HepG2 (cell line): ENCODE measurements at regions of chr6 and their contacts with region 1.

Region 1: GRCh38 chr6:133512410-133513016 is 271.4 kb downstream of the EYA4 start:
- DNase-seq: peak; percentile 46
- ATAC-seq: peak; percentile 80
- H3K4me3 ChIP-seq: no peak overlapping the region
- H3K27ac ChIP-seq: no peak overlapping the region
- H3K4me1 ChIP-seq: no peaks in the 10 kb centered on the region
- H3K27me3 ChIP-seq: peaks cover 0 to 2% of the 10 kb centered on the region in 2 experiments; a peak in 1 of 5 replicates
- CTCF ChIP-seq: peak; percentile 81
- EP300 ChIP-seq: no peak
- POLR2A ChIP-seq: no peak
- RAD21 ChIP-seq: peak; percentile 69

Region 2: DNA sequence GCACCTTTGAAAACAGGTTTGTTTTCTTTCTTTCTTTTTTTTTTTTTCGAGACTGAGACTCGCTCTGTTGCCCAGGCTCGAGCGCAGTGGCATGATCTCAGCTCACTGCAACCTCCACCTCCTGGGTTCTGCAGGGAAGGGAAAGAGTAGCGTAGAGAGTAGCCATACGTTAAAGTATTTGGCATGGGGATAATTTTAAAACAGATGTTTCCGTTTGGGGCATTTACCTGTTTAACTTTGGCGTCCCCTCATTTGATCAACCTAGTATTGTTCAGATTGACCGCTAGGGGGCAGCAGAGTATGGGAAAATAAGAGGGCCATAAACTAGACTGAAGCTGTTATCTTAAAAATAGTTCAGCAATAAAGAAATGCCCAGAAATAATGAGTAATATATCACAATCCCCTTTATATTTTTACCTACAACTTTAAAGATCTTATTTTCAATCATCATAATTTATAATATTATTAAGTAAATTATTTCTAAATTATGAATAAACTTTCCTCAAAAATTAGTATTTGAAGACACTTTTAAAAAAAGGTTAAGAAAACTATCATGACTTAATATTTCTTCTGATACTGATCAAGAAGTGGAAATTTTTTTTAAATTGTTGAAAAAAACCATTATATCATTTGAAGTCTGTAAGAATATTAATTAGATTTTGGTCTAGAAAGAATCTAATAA is 982.1 kb before region 1 on chr6:
- CTCF ChIA-PET with region 1: interaction called, 4 read pairs
- POLR2A ChIA-PET with region 1: no interaction called
- in situ Hi-C with region 1: no loop called
- intact Hi-C with region 1: loop called (anchors 5 kb)
- DNase-seq: peak; percentile 72
- ATAC-seq: peak; percentile 90
- H3K4me3 ChIP-seq: peak overlapping the region in 2 of 3 experiments; percentile 29 to 58; a peak in 4 of 6 replicates
- H3K27ac ChIP-seq: no peak overlapping the region
- H3K4me1 ChIP-seq: peaks cover 25% of the 10 kb centered on the region
- H3K27me3 ChIP-seq: peaks cover 0 to 6% of the 10 kb centered on the region in 2 experiments; a peak in 2 of 5 replicates
- CTCF ChIP-seq: peak; percentile 81
- EP300 ChIP-seq: no peak
- POLR2A ChIP-seq: no peak
- RAD21 ChIP-seq: peak; percentile 68; the same call in 1 of the 2 replicates

Region 3: GRCh38 chr6:132820629-132821381 is 691.7 kb before region 1 on chr6:
- CTCF ChIA-PET with region 1: interaction called, 10 read pairs
- POLR2A ChIA-PET with region 1: no interaction called
- in situ Hi-C with region 1: no loop called
- intact Hi-C with region 1: loop called (anchors 1 kb)
- DNase-seq: peak; percentile 20
- ATAC-seq: peak; percentile 65
- H3K4me3 ChIP-seq: no peak overlapping the region
- H3K27ac ChIP-seq: no peak overlapping the region
- H3K4me1 ChIP-seq: peaks cover 46% of the 10 kb centered on the region
- H3K27me3 ChIP-seq: no peaks in the 10 kb centered on the region; a peak in 1 of 5 replicates
- CTCF ChIP-seq: no peak
- EP300 ChIP-seq: no peak
- POLR2A ChIP-seq: peak; percentile 48 to 76; a peak in 3 of 4 replicates
- RAD21 ChIP-seq: no peak

Region 4: GRCh38 chr6:132830334-132830751 is 682.2 kb before region 1 on chr6:
- CTCF ChIA-PET with region 1: interaction called, 12 read pairs
- POLR2A ChIA-PET with region 1: no interaction called
- in situ Hi-C with region 1: loop called (anchors 5 kb)
- intact Hi-C with region 1: loop called (anchors 1 kb)
- DNase-seq: peak; percentile 33
- ATAC-seq: peak; percentile 81
- H3K4me3 ChIP-seq: no peak overlapping the region
- H3K27ac ChIP-seq: no peak overlapping the region
- H3K4me1 ChIP-seq: no peaks in the 10 kb centered on the region
- H3K27me3 ChIP-seq: peaks cover 0 to 7% of the 10 kb centered on the region in 2 experiments; a peak in 1 of 5 replicates
- CTCF ChIP-seq: peak; percentile 70
- EP300 ChIP-seq: no peak
- POLR2A ChIP-seq: no peak
- RAD21 ChIP-seq: peak; percentile 57; the same call in 1 of the 2 replicates

Region 5: DNA sequence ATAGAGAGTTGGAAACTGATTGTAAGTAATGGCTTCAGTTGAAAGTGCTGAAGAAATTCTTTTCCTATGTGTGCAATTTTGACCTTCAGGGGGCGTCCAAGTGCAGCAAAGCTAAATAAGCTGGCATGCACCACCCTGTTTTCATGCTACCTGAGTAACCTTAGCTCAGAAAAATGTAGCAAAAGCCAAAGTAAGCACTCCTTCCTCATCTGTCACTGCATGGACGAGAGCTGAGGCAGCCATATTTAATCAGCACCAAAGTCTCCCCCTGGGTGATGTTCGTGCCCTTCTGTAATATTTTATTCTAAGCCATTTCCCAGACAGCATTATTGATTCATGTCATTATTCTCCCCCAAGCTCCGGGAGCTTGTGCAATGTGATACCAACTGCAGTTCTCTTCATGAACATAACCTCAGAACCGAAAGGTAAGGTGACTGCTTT is 575.0 kb before region 1 on chr6:
- CTCF ChIA-PET with region 1: interaction called, 6 read pairs
- POLR2A ChIA-PET with region 1: no interaction called
- in situ Hi-C with region 1: no loop called
- intact Hi-C with region 1: loop called (anchors 1 kb)
- DNase-seq: peak; percentile 62
- ATAC-seq: peak; percentile 82
- H3K4me3 ChIP-seq: no peak overlapping the region
- H3K27ac ChIP-seq: no peak overlapping the region
- H3K4me1 ChIP-seq: no peaks in the 10 kb centered on the region
- H3K27me3 ChIP-seq: peaks cover 0 to 10% of the 10 kb centered on the region in 2 experiments; a peak in 2 of 5 replicates
- CTCF ChIP-seq: peak; percentile 77
- EP300 ChIP-seq: no peak
- POLR2A ChIP-seq: no peak
- RAD21 ChIP-seq: 0 out of 2 replicates have a peak, but pooled peaks have one; percentile 24

Region 6: GRCh38 chr6:133040094-133040802 is 472.3 kb before region 1 on chr6:
- CTCF ChIA-PET with region 1: no interaction called
- POLR2A ChIA-PET with region 1: no interaction called
- in situ Hi-C with region 1: no loop called
- intact Hi-C with region 1: loop called (anchors 1 kb)
- DNase-seq: peak; percentile 54
- ATAC-seq: peak; percentile 84
- H3K4me3 ChIP-seq: no peak overlapping the region
- H3K27ac ChIP-seq: no peak overlapping the region
- H3K4me1 ChIP-seq: peaks cover 16% of the 10 kb centered on the region
- H3K27me3 ChIP-seq: no peaks in the 10 kb centered on the region
- CTCF ChIP-seq: peak; percentile 71
- EP300 ChIP-seq: no peak
- POLR2A ChIP-seq: no peak
- RAD21 ChIP-seq: peak; percentile 78

Region 7: DNA sequence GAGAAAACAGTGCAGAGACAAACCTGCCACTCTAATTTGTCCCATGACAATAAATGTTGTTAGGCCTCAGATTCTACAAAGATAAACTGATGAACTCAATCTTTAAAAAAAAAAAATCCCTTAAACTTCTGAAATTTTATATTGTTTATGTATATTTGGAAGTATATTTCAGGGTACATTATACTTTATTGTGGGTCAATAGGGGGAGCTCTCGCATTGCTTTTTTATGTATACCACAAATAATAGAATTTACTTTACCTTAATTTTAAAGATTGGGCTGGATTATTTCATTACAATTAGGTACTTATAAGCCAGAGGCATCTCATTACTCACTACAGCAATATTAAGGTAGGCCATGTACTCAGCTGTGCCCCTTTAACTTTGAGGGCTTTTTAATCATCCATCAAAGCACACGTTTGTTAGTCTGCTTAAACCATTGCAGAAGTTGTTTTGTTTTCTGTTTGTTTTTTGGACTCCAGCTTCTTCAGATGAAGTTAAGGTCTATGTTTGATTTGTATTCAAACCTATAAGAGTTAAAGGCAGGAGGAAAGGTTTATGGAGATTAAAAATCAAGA is 327.6 kb before region 1 on chr6:
- CTCF ChIA-PET with region 1: no interaction called
- POLR2A ChIA-PET with region 1: no interaction called
- in situ Hi-C with region 1: no loop called
- intact Hi-C with region 1: loop called (anchors 1 kb)
- DNase-seq: no peak
- ATAC-seq: no peak
- H3K4me3 ChIP-seq: no peak overlapping the region
- H3K27ac ChIP-seq: no peak overlapping the region
- H3K4me1 ChIP-seq: no peaks in the 10 kb centered on the region
- H3K27me3 ChIP-seq: no peaks in the 10 kb centered on the region
- CTCF ChIP-seq: peak; percentile 10; the same call in 1 of the 2 replicates
- EP300 ChIP-seq: no peak
- POLR2A ChIP-seq: no peak
- RAD21 ChIP-seq: no peak

Region 8: DNA sequence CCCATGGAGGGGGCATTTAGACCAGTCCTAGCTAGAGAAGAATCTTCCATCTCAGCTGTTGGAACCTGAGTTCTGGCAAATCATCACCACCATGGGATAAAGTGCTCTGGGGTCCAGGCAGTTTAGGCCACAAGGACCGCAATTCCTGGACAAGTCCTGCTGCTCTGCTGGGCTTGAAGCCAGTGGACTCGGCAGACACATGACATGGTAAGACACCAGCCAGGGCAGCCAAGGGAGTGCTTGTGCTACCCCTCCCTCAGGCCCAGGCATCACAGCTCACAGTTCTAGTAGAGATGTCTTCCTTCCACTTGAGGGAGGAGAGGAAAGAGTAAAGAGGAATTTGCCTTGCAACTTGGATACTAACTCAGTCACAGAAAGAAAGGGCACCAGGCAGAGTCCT is 25.3 kb before region 1 on chr6:
- CTCF ChIA-PET with region 1: no interaction called
- POLR2A ChIA-PET with region 1: no interaction called
- in situ Hi-C with region 1: no loop called
- intact Hi-C with region 1: no loop called
- DNase-seq: no peak
- ATAC-seq: no peak
- H3K4me3 ChIP-seq: no peak overlapping the region
- H3K27ac ChIP-seq: no peak overlapping the region
- H3K4me1 ChIP-seq: no peaks in the 10 kb centered on the region
- H3K27me3 ChIP-seq: no peaks in the 10 kb centered on the region; a peak in 1 of 5 replicates
- CTCF ChIP-seq: no peak
- EP300 ChIP-seq: no peak
- POLR2A ChIP-seq: no peak
- RAD21 ChIP-seq: no peak

Region 9: DNA sequence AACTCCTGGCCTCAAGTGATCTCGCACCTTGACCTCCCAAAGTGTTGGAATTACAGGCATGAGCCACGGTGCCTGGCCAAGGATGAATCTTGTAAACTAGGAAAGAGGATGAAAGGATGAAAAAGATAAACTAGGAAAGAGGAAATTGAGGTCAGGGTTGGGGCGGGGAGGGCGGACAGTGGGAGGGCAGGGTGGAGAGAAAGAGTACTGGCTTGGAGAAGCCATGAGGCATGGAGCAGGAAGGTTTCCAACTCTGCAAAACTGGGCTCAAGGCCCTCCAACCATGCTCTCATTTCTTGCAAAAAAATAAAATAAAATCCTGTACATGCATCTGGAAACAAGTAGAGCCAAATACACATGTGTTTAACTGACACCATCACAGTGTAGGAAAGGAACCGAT is 1062.0 kb after region 1 on chr6:
- CTCF ChIA-PET with region 1: no interaction called
- POLR2A ChIA-PET with region 1: no interaction called
- in situ Hi-C with region 1: no loop called
- intact Hi-C with region 1: no loop called
- DNase-seq: no peak
- ATAC-seq: no peak
- H3K4me3 ChIP-seq: no peak overlapping the region
- H3K27ac ChIP-seq: no peak overlapping the region
- H3K4me1 ChIP-seq: no peaks in the 10 kb centered on the region
- H3K27me3 ChIP-seq: no peaks in the 10 kb centered on the region
- CTCF ChIP-seq: no peak
- EP300 ChIP-seq: no peak
- POLR2A ChIP-seq: no peak
- RAD21 ChIP-seq: no peak